HEK293 (cell line): ENCODE measurements at regions of chr9 and their contacts with region 1.

Region 1: DNA sequence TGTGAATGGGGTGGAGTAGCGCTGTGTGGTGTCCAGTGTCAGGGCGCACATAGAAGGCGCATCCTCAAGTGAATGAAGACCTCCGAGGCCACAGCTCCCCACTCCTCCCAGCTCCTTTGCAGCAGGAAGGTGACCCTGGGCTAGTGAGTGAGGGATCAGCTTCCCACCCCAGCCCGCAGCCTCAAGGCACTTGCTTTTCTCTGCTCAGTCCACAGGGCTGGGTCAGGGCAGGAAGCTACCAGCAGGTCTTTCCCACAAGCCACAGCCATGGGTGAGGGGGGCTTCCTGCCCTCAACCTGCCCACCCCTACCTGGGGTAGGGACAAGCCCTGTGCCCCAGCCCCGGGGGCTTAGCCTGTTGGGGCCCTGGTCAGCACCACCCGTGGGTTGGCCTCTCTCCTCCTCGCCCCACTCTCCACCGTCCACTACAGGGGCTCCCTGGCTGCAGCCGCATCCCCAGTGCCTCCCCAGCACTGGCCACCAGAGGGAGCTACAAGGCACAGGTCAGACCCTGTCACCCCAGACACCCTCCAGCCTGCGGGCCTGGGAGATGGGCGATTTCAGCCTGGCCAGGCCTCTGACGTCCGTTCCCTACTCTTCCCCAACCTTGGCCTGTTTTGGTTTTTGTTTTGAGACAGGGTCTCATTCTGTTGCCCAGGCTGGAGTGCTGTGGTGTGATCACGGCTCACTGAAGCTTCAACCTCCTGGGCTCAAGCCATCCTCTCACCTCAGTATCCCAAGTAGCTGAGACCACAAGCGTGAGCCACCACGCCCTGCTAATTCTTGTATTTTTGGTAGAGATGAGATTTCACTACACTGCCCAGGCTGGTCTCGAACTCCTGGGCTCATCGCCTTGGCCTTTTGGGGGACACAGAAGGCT is 1.3 kb upstream of the ABCA2 start:
- H3K4me3 ChIP-seq: no peak overlapping the region
- H3K27ac ChIP-seq: no peak overlapping the region
- H3K4me1 ChIP-seq: peaks cover 2% of the 10 kb centered on the region; the same call in 1 of the 2 replicates
- CTCF ChIP-seq: peak; percentile 94

Region 2: DNA sequence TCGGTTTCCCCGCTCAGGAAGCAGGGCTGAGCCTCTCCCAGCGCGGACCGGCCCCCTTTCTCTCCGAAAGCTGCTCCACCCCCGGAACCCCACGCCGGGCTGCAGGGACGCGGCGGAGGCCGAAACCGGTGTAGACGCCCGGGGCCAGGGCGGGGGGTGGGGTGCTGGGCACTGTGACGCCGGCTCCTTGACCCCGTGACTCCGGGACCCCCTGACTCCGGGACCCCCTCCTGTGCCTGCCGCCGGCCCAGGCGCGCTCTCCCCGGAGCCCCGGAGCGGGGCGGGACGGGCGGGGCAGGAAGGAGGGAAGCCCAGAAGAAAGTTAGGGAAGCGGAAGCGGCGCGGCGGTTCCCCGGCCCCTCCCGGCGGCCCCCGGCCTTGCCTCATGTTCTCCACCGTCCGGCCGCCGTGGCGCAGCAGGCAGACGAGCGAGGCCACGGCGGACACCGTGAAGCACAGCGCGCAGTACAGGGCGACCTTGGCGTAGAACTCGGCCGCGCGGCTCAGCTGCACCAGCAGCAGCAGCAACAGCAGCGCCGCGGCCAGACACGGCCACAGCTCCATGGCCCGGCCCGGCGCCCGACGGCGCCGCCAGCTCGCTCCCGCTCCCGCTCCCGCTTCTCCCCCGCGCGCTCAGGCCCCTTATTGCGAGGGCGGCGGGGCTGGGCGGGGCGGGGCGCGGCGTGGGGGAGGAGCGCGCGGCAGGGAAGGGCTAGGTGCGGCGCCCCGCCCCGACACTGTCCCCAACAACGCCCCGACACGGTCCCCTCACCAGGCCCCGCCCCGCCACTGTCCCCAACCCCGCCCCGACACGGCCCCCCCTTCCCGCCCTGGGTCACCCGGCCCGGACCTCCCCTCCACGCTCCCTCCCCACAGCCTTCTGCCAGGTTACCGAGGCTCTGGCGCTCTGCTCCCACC is 342.2 kb before region 1 on chr9 and contains the start of gene AGPAT2:
- CTCF ChIA-PET with region 1: no interaction called
- POLR2A ChIA-PET with region 1: no interaction called
- H3K4me3 ChIP-seq: peak within 1 kb of the TSS; percentile 71
- H3K27ac ChIP-seq: peak within 1 kb of the TSS; percentile 74; the same call in 1 of the 2 replicates
- H3K4me1 ChIP-seq: peaks cover 5% of the 10 kb centered on the region
- CTCF ChIP-seq: peak; percentile 45; the same call in 1 of the 2 replicates

Region 3: GRCh38 chr9:136814725-136815421 is 214.4 kb before region 1 on chr9:
- CTCF ChIA-PET with region 1: interaction called, 10 read pairs
- POLR2A ChIA-PET with region 1: no interaction called
- H3K4me3 ChIP-seq: no peak overlapping the region
- H3K27ac ChIP-seq: no peak overlapping the region
- H3K4me1 ChIP-seq: peaks cover 4% of the 10 kb centered on the region; the same call in 1 of the 2 replicates
- CTCF ChIP-seq: no peak

Region 4: GRCh38 chr9:136965771-136966484 is 63.4 kb before region 1 on chr9:
- CTCF ChIA-PET with region 1: interaction called, 11 read pairs
- POLR2A ChIA-PET with region 1: no interaction called
- H3K4me3 ChIP-seq: no peak overlapping the region
- H3K27ac ChIP-seq: no peak overlapping the region
- H3K4me1 ChIP-seq: no peaks in the 10 kb centered on the region
- CTCF ChIP-seq: no peak

Region 5: GRCh38 chr9:137000177-137000883 is 29.0 kb before region 1 on chr9:
- CTCF ChIA-PET with region 1: interaction called, 38 read pairs
- POLR2A ChIA-PET with region 1: interaction called, 3 read pairs
- H3K4me3 ChIP-seq: no peak overlapping the region
- H3K27ac ChIP-seq: no peak overlapping the region
- H3K4me1 ChIP-seq: peaks cover 5% of the 10 kb centered on the region
- CTCF ChIP-seq: no peak

Region 6: DNA sequence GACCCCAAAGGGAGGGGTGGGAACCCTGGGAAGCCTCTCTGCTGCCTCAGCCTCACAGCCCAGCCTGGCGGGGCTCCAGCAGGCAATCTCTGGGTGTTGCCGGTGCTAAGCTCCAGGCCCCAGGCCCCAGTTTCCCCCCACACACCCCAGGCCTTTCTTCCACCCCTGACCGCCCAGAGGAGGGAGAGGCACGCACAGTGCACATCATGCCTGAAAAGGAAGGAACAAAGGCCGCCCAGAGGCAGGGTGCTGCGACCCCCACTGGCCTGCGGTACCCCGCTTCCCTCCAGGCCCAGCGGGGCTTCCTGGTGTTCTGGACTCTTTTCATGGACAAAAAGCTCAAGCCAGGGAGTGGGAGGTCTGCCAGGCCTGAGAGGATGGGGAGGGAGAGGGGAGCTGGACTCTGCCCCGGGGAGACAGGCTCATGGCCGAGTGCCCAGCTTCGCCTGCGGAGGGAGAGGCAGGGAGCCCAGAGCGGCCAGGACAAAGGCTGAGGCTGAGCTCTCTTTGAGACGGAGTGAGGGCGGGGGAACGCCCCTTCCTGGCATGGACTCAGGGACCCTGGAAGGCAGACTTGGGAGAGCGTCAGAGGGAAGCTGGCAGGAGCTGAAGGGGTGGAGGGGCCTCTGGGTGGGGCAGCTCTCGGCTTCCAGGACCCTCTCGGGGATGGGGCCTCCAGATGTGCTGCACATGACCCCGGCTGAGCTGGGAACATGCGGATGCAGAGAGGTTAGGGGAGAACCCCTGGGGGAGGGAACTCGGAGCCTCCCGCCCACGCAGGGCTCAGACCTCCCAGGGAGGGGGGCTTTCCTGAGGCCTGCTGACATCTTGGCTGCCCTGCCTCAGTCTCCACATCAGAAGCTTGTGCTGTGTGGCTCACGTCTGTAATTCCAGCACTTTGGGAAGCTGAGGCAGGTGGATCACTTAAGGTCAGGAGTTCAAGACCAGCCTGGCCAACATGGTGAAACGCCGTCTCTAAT is 26.4 kb after region 1 on chr9:
- CTCF ChIA-PET with region 1: interaction called, 18 read pairs
- POLR2A ChIA-PET with region 1: no interaction called
- H3K4me3 ChIP-seq: no peak overlapping the region
- H3K27ac ChIP-seq: no peak overlapping the region
- H3K4me1 ChIP-seq: no peaks in the 10 kb centered on the region
- CTCF ChIP-seq: no peak

Region 7: DNA sequence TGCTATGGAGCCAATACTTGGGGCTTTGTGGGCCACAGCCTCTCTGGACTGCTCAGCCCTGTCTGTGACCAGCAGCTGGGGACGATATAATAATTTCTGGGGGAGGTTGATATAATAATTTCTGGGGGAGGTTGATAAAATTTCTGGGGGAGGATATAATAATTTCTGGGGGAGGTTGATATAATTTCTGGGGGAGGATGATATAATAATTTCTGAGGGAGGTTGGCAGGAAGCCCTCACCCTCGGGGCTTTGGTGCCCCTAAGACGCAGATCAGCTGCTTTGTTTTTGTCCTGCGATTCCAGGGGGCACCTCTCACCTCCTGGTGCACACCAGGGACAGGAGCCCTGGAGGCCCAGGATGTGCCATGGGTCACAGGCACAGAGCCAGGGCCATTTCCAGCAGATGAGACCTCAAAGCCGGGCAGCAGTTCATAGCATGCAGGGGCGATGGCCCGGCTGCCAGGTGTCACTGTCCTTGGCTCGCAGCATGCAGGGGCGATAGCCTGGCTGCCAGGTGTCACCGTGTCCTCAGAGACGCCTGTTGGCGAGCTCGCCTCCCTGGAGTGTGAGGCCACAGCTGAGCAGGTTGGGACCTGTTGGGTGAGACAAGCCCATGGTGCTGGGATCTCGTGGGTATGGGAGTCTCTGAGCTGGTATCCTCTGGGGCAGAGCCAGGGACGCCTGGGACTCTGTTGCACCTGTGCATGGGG is 244.5 kb after region 1 on chr9:
- CTCF ChIA-PET with region 1: no interaction called
- POLR2A ChIA-PET with region 1: no interaction called
- H3K4me3 ChIP-seq: no peak overlapping the region
- H3K27ac ChIP-seq: no peak overlapping the region
- H3K4me1 ChIP-seq: 0 out of 2 replicates have a peak, but pooled peaks cover 4% of the 10 kb centered on the region
- CTCF ChIP-seq: no peak